CD8-positive, alpha-beta T cell (primary cell): ENCODE measurements at regions of chr5 and their contacts with region 1.

Region 1: GRCh38 chr5:179732417-179732917 is at the start of gene MAML1:
- DNase-seq: peak; percentile 98 to 100 (median 99)
- ATAC-seq: peak; percentile 93
- H3K4me3 ChIP-seq: peak within 1 kb of the TSS; percentile 52 to 76
- H3K4me3 Mint-ChIP-seq: peak within 1 kb of the TSS; percentile 95
- H3K27ac ChIP-seq: peak within 1 kb of the TSS; percentile 62 to 91
- H3K27ac Mint-ChIP-seq: peak within 1 kb of the TSS; percentile 97
- H3K4me1 ChIP-seq: peaks cover 28% of the 10 kb centered on the region
- H3K4me1 Mint-ChIP-seq: peaks cover 40% of the 10 kb centered on the region
- H3K27me3 ChIP-seq: no peaks in the 10 kb centered on the region
- H3K27me3 Mint-ChIP-seq: no peaks in the 10 kb centered on the region
- CTCF ChIP-seq: no peak
- total RNA-seq, gene MAML1: 23.4 to 26.9 TPM

Region 2: GRCh38 chr5:179623003-179623880 is 109.2 kb before region 1 on chr5 and contains the start of gene HNRNPH1:
- CTCF ChIA-PET with region 1: interaction called, 5 read pairs
- POLR2A ChIA-PET with region 1: interaction called, 15 read pairs
- intact Hi-C with region 1: loop called (anchors 1 kb)
- DNase-seq: peak; percentile 97 to 99 (median 98)
- ATAC-seq: peak; percentile 74
- H3K4me3 ChIP-seq: peak within 1 kb of the TSS; percentile 86 to 98
- H3K4me3 Mint-ChIP-seq: peak within 1 kb of the TSS; percentile 95
- H3K27ac ChIP-seq: peak within 1 kb of the TSS; percentile 97 to 99
- H3K27ac Mint-ChIP-seq: peak within 1 kb of the TSS; percentile 98
- H3K4me1 ChIP-seq: peaks cover 48% of the 10 kb centered on the region
- H3K4me1 Mint-ChIP-seq: peaks cover 44% of the 10 kb centered on the region
- H3K27me3 ChIP-seq: no peaks in the 10 kb centered on the region
- H3K27me3 Mint-ChIP-seq: no peaks in the 10 kb centered on the region
- CTCF ChIP-seq: no peak
- total RNA-seq, gene HNRNPH1: 2,565 to 2,635 TPM

Region 3: DNA sequence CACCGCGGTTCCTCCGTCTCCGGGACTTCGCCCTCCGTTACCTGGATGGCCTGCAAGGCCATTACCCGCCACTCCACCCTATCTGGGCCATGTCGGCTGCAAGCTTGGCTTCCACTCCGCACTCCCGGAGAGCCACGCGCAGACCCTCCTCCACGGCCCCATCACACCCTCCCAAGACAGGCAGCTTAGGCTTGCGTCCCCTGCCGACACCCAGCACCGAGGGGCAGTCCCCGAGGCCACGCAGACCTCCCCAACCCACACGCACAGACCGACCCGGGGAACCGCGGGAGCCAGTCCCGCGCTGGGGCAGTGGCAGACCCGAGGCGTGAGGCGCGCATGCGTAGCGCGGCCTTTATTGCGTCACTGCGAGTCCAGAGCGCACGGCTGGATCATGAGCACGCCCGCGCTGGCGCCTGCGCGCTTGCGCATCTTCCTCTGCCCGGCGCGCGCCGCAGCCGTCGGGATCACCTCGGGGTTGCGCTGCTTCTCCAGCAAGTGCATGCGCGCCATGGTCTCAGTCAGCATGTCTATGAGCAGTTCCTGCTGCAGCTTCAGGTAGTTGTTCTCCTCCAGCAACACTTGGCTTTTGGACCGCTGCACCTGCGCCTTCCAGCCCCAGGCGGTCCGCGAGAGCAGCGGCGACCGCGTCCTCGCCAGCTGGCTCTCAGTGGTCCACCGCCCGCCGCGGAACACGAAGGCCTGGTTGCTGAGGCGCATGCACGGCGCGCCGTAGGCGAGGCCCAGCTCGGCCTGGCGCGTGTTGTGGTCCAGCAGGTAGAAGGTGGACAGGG is 54.0 kb before region 1 on chr5:
- CTCF ChIA-PET with region 1: no interaction called
- POLR2A ChIA-PET with region 1: interaction called, 22 read pairs
- intact Hi-C with region 1: loop called (anchors 1 kb)
- DNase-seq: peak; percentile 85 to 98 (median 92)
- ATAC-seq: peak; percentile 85
- H3K4me3 ChIP-seq: peak overlapping the region; percentile 66 to 98
- H3K4me3 Mint-ChIP-seq: peak overlapping the region; percentile 98
- H3K27ac ChIP-seq: peak overlapping the region; percentile 83 to 91
- H3K27ac Mint-ChIP-seq: peak overlapping the region; percentile 99
- H3K4me1 ChIP-seq: peaks cover 22% of the 10 kb centered on the region
- H3K4me1 Mint-ChIP-seq: peaks cover 37% of the 10 kb centered on the region
- H3K27me3 ChIP-seq: no peaks in the 10 kb centered on the region
- H3K27me3 Mint-ChIP-seq: no peaks in the 10 kb centered on the region
- CTCF ChIP-seq: no peak

Region 4: DNA sequence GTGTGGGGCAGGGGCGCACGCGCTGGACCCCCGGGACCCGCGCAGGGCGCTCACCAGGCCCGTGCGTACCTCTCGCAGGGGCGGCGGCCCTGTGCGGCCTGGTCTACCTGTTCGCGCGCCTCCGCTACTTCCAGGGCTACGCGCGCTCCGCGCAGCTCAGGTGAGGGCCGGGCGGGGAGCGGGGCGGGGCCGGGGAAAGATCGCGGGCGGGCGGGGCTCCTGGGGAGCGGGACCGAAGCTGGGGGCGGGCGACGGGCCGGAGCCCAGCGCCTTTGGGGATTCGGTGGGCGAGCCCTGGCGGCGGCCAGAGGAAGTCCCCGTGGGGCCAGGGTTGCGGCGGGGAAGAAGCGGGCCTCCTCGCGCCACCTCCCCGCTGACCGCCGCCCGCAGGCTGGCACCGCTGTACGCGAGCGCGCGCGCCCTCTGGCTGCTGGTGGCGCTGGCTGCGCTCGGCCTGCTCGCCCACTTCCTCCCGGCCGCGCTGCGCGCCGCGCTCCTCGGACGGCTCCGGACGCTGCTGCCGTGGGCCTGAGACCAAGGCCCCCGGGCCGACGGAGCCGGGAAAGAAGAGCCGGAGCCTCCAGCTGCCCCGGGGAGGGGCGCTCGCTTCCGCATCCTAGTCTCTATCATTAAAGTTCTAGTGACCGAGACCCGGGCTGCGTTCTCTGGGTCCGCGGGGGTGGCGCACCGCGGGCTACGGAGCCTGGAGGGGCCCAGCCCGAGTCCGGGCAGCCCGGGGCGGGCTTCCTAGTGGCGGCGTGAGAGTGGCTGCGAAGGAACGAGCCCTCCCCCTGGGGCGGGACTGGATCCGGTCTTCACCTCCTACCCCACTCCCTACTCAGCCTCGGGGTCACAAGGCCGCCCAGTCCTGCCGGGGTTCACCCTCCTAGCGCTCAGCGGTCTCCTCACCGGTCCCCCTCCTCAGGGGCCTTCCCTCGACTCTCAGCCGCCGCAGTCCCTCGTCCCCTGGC is 63.7 kb after region 1 on chr5:
- CTCF ChIA-PET with region 1: interaction called, 6 read pairs
- POLR2A ChIA-PET with region 1: interaction called, 4 read pairs
- intact Hi-C with region 1: loop called in 1 of 2 experiments (anchors 2 kb)
- DNase-seq: peak; percentile 43 to 86 (median 66)
- ATAC-seq: peak; percentile 64
- H3K4me3 ChIP-seq: peak overlapping the region; percentile 36 to 50
- H3K4me3 Mint-ChIP-seq: peak overlapping the region; percentile 75
- H3K27ac ChIP-seq: peak overlapping the region; percentile 23 to 31
- H3K27ac Mint-ChIP-seq: peak overlapping the region; percentile 37
- H3K4me1 ChIP-seq: peaks cover 33% of the 10 kb centered on the region
- H3K4me1 Mint-ChIP-seq: peaks cover 29% of the 10 kb centered on the region
- H3K27me3 ChIP-seq: no peaks in the 10 kb centered on the region
- H3K27me3 Mint-ChIP-seq: no peaks in the 10 kb centered on the region
- CTCF ChIP-seq: peak; percentile 67

Region 5: DNA sequence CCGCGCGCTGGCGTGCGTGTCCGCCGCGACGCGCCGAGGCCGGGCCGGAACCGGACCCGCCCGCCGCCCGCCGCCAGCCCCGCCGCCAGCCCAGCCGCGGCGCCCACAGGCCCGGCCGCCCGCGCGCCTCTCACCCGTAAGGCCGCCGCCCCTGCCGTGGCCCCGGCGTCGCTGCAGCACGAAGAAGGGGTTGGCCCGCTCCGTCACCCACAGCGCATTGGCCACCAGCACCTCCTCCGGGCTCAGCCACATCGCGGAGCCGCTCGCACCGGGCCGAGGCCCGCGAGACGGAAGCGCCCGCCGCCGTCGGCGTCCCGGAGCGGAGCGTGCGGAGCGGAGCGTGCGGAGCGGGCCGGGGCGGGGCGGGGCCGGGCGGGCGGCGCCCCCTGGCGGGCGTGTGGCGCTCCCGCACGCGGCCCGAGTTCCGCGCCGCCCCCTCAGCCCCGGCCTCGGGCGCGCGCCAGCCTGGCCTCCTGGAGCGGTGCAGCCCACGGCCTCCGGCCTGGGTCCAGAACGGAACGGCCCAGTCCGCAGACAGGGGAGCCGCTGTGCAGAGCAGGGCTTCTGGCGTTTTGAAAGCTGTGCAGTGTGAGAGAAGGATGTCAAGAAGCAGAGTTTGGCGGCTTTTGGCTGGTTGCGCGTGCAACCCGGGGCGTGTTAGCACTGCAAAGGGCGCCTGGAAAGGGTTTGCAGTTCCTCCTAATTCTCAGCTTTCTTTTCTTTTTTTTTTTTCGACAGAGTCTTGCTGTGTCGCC is 175.3 kb after region 1 on chr5 and contains the start of gene TBC1D9B:
- CTCF ChIA-PET with region 1: interaction called, 3 read pairs
- POLR2A ChIA-PET with region 1: interaction called, 4 read pairs
- intact Hi-C with region 1: loop called (anchors 1 to 10 kb)
- DNase-seq: peak; percentile 37 to 90 (median 67)
- ATAC-seq: peak; percentile 90
- H3K4me3 ChIP-seq: peak within 1 kb of the TSS; percentile 52 to 57
- H3K4me3 Mint-ChIP-seq: peak within 1 kb of the TSS; percentile 86
- H3K27ac ChIP-seq: peak within 1 kb of the TSS in 1 of 2 experiments; percentile 54
- H3K27ac Mint-ChIP-seq: peak within 1 kb of the TSS; percentile 79
- H3K4me1 ChIP-seq: peaks cover 17% of the 10 kb centered on the region
- H3K4me1 Mint-ChIP-seq: peaks cover 15% of the 10 kb centered on the region
- H3K27me3 ChIP-seq: no peaks in the 10 kb centered on the region
- H3K27me3 Mint-ChIP-seq: no peaks in the 10 kb centered on the region
- CTCF ChIP-seq: peak; percentile 14
- total RNA-seq, gene TBC1D9B: 39.7 to 48.1 TPM